Activated T-helper 1 cell treated with anti-CD3 and anti-CD28 coated beads, Interleukin-12 subunit alpha, Interleukin-12 subunit beta, Interleukin-2, Interleukin-4 antibody, amounts not matched to agents 30 ng/mL and 10 ng/mL and 1 ng/mL, durations not matched to agents 14 hours and 24 hours and 36 hours (primary cell): ENCODE measurements at regions of chr16 and their contacts with region 1.

Region 1: DNA sequence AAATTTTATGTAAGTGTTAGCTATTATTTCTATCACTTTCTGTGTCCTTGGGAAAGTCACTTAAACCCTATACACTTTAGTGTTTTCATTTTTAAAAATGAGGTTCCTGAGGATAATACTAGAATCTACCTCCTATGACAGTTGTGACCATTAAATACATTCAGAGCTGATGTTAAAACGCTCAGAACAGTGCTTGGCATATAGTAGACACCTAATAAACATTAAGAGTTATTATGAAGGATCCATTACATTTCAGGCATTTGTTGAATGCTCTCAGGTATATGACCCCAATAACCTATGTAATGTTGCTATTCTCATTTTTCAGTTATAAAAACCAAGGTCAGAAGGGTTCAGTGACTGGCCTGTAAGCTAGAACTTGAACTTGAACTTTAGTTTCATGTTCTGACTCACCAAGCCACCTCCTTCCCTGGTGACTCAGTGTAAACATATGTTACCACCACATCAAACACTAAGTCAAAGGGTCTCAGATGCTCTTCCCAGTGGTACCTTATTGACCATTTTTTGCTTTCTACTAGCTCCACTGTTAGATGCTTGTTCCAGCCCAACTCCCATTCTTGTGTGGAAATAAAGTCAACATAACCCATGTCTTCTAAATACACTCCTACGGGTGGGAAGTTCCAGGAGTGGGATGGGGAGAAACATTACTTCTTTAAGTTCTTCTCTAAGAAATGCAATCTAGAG is 47.6 kb downstream of the HSD17B2 start:
- DNase-seq: peak; percentile 1
- H3K4me3 Mint-ChIP-seq: no peak overlapping the region
- H3K27ac Mint-ChIP-seq: no peak overlapping the region
- H3K4me1 Mint-ChIP-seq: peaks cover 9% of the 10 kb centered on the region
- H3K27me3 Mint-ChIP-seq: peaks cover 29% of the 10 kb centered on the region

Region 2: DNA sequence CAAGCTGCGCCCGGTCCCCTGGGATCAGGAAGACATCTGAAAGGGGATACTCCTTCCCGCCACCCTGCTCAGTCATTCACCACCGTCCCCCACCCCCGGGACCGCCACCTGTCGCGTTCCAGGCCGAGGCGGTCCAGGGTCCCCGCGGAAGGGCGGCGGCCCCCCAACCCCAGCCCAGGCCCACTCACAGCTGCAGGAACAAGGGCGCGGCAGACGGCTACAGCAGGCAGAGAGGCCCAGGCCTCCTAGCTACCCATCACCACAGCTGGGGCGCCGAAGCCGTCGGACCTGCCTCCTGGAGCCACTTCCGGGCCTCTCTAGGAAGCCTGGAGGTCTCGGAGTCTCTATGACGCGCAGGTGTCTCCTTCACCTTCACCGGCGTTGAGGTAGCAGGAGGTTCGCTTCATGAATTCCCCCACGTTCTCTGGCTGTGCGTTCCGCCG is 71.5 kb before region 1 on chr16 and contains the start of gene SDR42E1:
- intact Hi-C with region 1: loop called (anchors 2 kb)
- DNase-seq: peak; percentile 42
- H3K4me3 Mint-ChIP-seq: peak within 1 kb of the TSS; percentile 88
- H3K27ac Mint-ChIP-seq: peak within 1 kb of the TSS; percentile 72
- H3K4me1 Mint-ChIP-seq: peaks cover 16% of the 10 kb centered on the region
- H3K27me3 Mint-ChIP-seq: peaks cover 5% of the 10 kb centered on the region
- total RNA-seq, gene SDR42E1: 5.7 and 5.9 TPM in 2 replicates

Region 3: DNA sequence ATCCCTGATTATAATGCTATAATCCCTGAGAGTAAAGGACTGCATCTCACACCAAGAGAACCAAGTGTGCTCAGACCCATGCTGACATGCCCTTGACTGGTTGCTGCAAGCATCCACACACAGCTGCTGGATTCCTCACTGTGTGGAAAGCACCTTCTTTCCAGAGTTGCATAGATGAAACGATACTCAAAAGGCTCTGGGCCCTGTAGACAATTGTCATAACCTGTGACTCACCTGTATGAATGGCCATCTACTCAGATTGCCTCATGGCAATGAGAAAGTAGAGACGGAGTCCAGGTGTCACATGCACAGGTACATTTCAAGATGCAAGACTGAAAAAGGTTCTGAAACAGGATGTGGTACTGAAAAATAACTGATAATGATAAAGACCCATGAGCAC is 29.2 kb after region 1 on chr16:
- intact Hi-C with region 1: no loop called
- DNase-seq: no peak
- H3K4me3 Mint-ChIP-seq: no peak overlapping the region
- H3K27ac Mint-ChIP-seq: no peak overlapping the region
- H3K4me1 Mint-ChIP-seq: no peaks in the 10 kb centered on the region
- H3K27me3 Mint-ChIP-seq: no peaks in the 10 kb centered on the region

Region 4: GRCh38 chr16:82192665-82193064 is 110.0 kb after region 1 on chr16:
- intact Hi-C with region 1: loop called (anchors 2 kb)
- DNase-seq: peak; percentile 7
- H3K4me3 Mint-ChIP-seq: peak overlapping the region; percentile 35
- H3K27ac Mint-ChIP-seq: peak overlapping the region; percentile 83
- H3K4me1 Mint-ChIP-seq: peaks cover 20% of the 10 kb centered on the region
- H3K27me3 Mint-ChIP-seq: peaks cover 17% of the 10 kb centered on the region

Region 5: GRCh38 chr16:82317411-82318167 is 234.9 kb after region 1 on chr16:
- intact Hi-C with region 1: no loop called
- DNase-seq: no peak
- H3K4me3 Mint-ChIP-seq: no peak overlapping the region
- H3K27ac Mint-ChIP-seq: no peak overlapping the region
- H3K4me1 Mint-ChIP-seq: no peaks in the 10 kb centered on the region
- H3K27me3 Mint-ChIP-seq: peaks cover 4% of the 10 kb centered on the region

Region 6: DNA sequence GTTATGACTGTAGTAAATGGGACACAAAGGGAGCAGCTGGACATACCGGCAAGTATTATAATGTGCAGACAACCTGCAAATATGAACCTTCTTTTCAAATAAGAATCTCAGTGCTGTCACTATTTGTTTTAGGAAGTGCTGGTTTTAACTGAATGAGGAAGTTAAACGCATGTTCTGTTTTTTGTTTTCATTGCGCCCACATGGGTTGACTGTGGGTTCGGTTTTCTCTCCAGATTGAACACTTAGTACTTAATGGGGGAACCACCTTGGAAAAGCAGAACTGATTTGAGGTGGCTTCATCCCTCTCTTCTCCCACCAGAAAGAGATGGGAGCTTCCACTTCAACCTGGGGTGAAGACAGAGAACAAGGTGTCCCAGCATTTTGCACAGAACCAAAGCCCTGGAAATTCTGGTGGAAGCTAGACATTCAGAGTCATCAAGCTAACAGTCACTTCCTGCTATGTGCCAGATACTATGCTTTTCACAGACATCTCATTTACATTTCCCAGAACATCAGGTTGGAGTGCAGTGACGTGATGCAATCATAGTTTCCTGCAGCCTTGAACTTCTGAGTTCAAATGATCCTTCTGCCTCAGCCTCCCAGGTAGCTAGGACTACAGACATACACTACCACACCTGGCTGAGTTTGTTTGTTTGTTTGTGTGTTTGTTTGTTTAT is 693.9 kb after region 1 on chr16:
- intact Hi-C with region 1: no loop called
- DNase-seq: no peak
- H3K4me3 Mint-ChIP-seq: no peak overlapping the region
- H3K27ac Mint-ChIP-seq: no peak overlapping the region
- H3K4me1 Mint-ChIP-seq: peaks cover 30% of the 10 kb centered on the region
- H3K27me3 Mint-ChIP-seq: peaks cover 16% of the 10 kb centered on the region